Left ventricle myocardium inferior (tissue), 1 donor: ENCODE measurements at regions of chr2 and their contacts with region 1.

Region 1: GRCh38 chr2:88828397-88829137 is 137.1 kb downstream of the RPIA start:
- DNase-seq: peak; percentile 65
- H3K4me3 ChIP-seq: peak overlapping the region; percentile 17
- H3K27ac ChIP-seq: peak overlapping the region; percentile 89
- H3K4me1 ChIP-seq: peaks cover 26% of the 10 kb centered on the region
- H3K27me3 ChIP-seq: peaks cover 17% of the 10 kb centered on the region
- CTCF ChIP-seq: no peak

Region 2: GRCh38 chr2:88554189-88554588 is 274.4 kb before region 1 on chr2:
- intact Hi-C with region 1: no loop called
- DNase-seq: no peak
- H3K4me3 ChIP-seq: no peak overlapping the region
- H3K27ac ChIP-seq: no peak overlapping the region
- H3K4me1 ChIP-seq: peaks cover 3% of the 10 kb centered on the region
- H3K27me3 ChIP-seq: peaks cover 10% of the 10 kb centered on the region
- CTCF ChIP-seq: peak; percentile 31

Region 3: GRCh38 chr2:88614497-88615157 is 213.9 kb before region 1 on chr2:
- intact Hi-C with region 1: no loop called
- DNase-seq: no peak
- H3K4me3 ChIP-seq: no peak overlapping the region
- H3K27ac ChIP-seq: peak overlapping the region; percentile 19
- H3K4me1 ChIP-seq: peaks cover 44% of the 10 kb centered on the region
- H3K27me3 ChIP-seq: no peaks in the 10 kb centered on the region
- CTCF ChIP-seq: no peak

Region 4: GRCh38 chr2:88627056-88627855 is 201.3 kb before region 1 on chr2 and contains the start of gene EIF2AK3:
- intact Hi-C with region 1: no loop called
- DNase-seq: peak; percentile 99
- H3K4me3 ChIP-seq: peak within 1 kb of the TSS; percentile 96
- H3K27ac ChIP-seq: peak within 1 kb of the TSS; percentile 98
- H3K4me1 ChIP-seq: peaks cover 50% of the 10 kb centered on the region
- H3K27me3 ChIP-seq: no peaks in the 10 kb centered on the region
- CTCF ChIP-seq: peak; percentile 44
- total RNA-seq, gene EIF2AK3: 8.2 TPM

Region 5: GRCh38 chr2:88739985-88740600 is 88.5 kb before region 1 on chr2:
- intact Hi-C with region 1: loop called (anchors 10 kb)
- DNase-seq: peak; percentile 58
- H3K4me3 ChIP-seq: no peak overlapping the region
- H3K27ac ChIP-seq: peak overlapping the region; percentile 86
- H3K4me1 ChIP-seq: peaks cover 49% of the 10 kb centered on the region
- H3K27me3 ChIP-seq: no peaks in the 10 kb centered on the region
- CTCF ChIP-seq: peak; percentile 95